ENCODE measurements at regions of chr12 and their contacts with region 1.

Region 1: GRCh38 chr12:14284184-14284722 is 81.2 kb upstream of the ATF7IP start:
- DNase-seq: peak; percentile 71
- H3K4me3 ChIP-seq: peak overlapping the region; percentile 60
- H3K27ac ChIP-seq: peak overlapping the region; percentile 95
- H3K4me1 ChIP-seq: peaks cover 58% of the 10 kb centered on the region
- CTCF ChIP-seq: peak; percentile 53

Region 2: DNA sequence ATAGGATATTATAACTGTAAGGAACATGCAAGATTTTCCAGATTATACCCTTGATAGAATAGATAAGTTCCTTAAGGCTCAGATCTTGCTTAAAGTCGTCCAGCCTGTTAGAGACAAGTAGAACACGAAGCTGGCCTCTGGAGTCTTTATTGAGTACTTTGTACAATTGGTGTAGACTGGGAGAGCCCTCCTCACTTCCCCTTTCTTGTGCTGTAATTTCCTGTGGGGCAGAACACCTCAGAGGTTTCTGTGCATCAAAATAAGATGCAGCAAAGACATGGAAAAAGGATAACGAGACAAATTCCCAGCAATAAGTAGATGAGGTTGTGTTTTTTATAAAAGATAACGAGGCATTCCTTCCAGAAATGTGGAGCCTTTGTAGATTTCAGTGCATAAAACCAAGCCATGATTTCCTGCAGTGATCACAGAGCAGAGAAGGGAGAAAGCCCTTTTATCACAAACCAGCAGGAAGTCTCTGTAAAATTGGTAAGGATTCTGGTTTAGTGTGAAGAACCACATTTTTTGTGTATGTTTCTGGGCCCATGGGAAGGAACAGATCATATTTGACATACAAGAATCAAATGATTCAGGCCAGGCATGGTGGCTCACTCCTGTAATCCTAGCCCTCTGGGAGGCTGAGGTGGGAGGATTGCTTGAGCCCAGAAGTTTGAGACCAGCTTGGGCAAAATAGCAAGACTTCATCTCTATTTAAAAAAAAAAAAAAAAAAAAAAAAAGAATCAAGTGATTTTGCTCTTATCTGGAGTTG is 1374.8 kb before region 1 on chr12:
- CTCF ChIA-PET with region 1: no interaction called
- POLR2A ChIA-PET with region 1: no interaction called
- intact Hi-C with region 1: no loop called
- DNase-seq: peak; percentile 63
- H3K4me3 ChIP-seq: no peak overlapping the region
- H3K27ac ChIP-seq: no peak overlapping the region
- H3K4me1 ChIP-seq: peaks cover 17% of the 10 kb centered on the region
- CTCF ChIP-seq: no peak

Region 3: DNA sequence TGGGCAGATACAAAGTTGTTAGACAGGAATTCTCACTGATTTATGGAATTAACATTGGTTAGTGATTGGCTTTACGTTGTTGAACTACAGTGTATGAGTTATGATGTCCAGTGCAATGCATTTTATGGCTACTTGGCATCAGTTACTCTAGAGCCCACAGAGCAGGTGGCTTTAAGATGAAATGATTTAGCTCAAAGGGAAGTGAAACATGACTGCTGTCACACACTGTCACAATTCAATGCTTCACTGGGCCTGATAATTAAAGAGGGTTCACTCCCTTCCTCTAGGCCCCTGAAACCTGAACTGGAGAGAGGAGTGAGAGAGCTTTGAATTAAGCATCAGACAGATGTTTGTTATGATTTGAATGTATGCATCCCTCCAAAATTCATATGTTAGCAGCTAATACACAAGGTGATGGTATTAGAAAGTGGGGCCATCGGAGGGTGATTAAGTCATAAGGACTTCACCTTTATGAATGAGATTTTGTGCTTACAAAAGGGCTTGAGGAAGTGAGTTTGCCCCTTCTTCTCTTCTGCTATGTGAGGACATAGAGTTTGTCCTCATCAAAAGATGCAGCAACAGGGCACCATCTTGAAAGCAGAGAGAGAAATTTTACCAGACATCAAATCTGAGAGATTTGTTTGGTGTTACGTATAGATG is 127.0 kb before region 1 on chr12:
- CTCF ChIA-PET with region 1: no interaction called
- POLR2A ChIA-PET with region 1: interaction called, 3 read pairs
- intact Hi-C with region 1: loop called (anchors 5 kb)
- DNase-seq: peak; percentile 99
- H3K4me3 ChIP-seq: peak overlapping the region; percentile 49
- H3K27ac ChIP-seq: peak overlapping the region; percentile 97
- H3K4me1 ChIP-seq: peaks cover 85% of the 10 kb centered on the region
- CTCF ChIP-seq: no peak

Region 4: DNA sequence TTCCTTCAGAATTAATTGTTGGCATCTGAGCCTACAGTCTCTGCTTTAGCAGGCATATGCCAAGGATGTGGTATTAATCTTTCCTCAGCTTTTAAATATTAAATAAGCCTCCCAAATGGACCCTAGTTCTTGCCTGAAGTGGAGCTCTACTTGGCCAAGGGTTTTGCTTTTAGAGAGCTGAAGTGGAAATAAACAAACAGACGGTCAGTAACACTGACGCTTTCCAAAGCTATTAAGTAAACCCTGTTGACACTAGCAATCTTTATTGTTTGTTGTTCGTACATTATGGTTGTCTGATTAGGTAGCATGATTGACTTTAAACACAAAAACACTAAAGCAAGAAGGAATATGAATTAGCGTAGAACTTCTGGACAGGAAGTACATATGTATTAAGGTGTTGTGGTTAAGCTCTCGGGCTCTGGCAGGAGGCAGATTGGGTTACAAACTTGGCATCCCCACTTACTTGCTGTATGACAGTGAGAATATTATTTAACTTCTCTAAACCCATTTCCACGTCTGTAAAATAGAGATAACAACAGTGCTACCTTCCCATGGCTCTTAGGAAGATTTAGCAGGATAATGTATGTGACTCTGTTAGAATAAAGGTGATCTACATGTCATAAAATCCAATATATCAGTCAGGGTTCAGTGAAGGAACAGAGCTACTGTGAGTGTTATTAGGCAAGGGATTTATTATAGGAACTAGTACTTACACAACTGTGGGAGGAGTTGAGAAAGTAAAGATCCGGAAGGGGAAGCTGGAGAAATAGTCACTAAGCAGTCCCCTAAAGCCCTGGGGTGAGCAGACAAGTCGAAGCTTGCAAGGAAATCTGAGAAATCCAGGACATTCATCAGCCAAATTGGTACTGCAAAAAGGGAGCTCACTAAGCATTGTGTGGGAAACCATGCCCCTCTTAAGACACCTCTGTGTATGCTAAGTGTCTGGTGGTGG is 11.0 kb before region 1 on chr12:
- CTCF ChIA-PET with region 1: interaction called, 8 read pairs
- POLR2A ChIA-PET with region 1: interaction called, 29 read pairs
- intact Hi-C with region 1: no loop called
- DNase-seq: peak; percentile 50
- H3K4me3 ChIP-seq: peak overlapping the region; percentile 16
- H3K27ac ChIP-seq: peak overlapping the region; percentile 51
- H3K4me1 ChIP-seq: peaks cover 49% of the 10 kb centered on the region
- CTCF ChIP-seq: no peak

Region 5: GRCh38 chr12:14365294-14366208 is 81.3 kb after region 1 on chr12 and contains the start of gene ATF7IP:
- CTCF ChIA-PET with region 1: interaction called, 4 read pairs
- POLR2A ChIA-PET with region 1: interaction called, 3 read pairs
- intact Hi-C with region 1: loop called (anchors 1 kb)
- DNase-seq: peak; percentile 68
- H3K4me3 ChIP-seq: peak within 1 kb of the TSS; percentile 22
- H3K27ac ChIP-seq: peak within 1 kb of the TSS; percentile 51
- H3K4me1 ChIP-seq: peaks cover 36% of the 10 kb centered on the region
- CTCF ChIP-seq: peak; percentile 75
- total RNA-seq, gene ATF7IP: 55.6 and 69.8 TPM in 2 replicates

Region 6: GRCh38 chr12:14473707-14474287 is 189.5 kb after region 1 on chr12:
- CTCF ChIA-PET with region 1: no interaction called
- POLR2A ChIA-PET with region 1: no interaction called
- intact Hi-C with region 1: no loop called
- DNase-seq: peak; percentile 55
- H3K4me3 ChIP-seq: no peak overlapping the region
- H3K27ac ChIP-seq: no peak overlapping the region
- H3K4me1 ChIP-seq: no peaks in the 10 kb centered on the region
- CTCF ChIP-seq: no peak

Region 7: DNA sequence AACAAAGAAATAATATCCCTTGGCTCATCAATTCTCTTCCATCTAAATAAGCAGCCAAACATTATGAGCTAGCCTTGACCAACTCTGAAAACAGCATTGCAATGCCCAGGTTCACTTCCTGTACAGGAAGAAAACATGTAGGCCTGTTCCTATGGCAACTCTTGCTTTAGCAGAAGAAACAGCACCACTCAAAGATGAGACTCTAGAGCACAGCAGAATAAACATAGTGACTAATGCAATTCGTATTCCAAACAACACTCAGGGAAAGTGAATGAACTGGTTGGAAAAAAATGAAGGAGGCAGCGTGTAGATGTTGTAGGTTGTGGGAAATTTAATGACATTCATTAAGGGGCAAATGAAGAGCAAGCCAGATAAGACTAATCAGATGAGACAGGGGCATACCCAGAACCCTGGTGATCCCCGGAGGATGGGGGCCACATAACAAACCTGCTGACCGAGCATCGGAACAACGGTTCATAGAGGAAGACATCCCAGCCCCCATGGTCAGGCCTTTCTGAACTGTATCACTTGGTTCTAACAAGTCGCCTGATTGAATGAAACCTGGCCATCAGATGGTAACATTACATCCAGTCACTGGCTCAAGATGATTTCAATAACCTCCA is 668.2 kb after region 1 on chr12:
- CTCF ChIA-PET with region 1: no interaction called
- POLR2A ChIA-PET with region 1: interaction called, 3 read pairs
- intact Hi-C with region 1: loop called (anchors 10 kb)
- DNase-seq: peak; percentile 77
- H3K4me3 ChIP-seq: peak overlapping the region; percentile 72
- H3K27ac ChIP-seq: peak overlapping the region; percentile 97
- H3K4me1 ChIP-seq: peaks cover 99% of the 10 kb centered on the region
- CTCF ChIP-seq: no peak